AG04450 (cell line): ENCODE measurements at regions of chr6 and their contacts with region 1.

Region 1: DNA sequence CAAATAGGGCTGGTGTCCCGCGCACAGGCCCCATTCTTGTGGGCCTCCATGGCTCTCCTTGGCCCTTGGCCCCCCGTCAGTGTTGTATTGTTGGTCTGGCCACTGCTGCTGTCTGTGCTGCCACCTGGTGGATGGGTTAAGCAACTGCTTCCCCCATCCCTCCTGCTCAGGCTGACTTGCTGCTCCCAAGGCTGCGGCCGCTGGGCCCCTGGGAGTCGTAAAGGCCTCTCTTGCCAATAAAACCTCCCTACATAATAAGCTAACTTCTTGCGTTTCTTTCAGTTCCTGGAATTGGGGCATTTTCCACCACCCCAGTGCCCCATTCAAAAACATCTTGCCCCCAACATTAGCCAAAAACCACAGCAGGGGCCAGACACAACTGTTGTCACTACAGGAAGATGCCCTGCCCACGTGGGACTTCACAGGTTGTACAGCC is 27.1 kb downstream of the CD83 start:
- DNase-seq: peak; percentile 27
- H3K4me3 ChIP-seq: no peak overlapping the region
- H3K27ac ChIP-seq: no peak overlapping the region
- H3K27me3 ChIP-seq: peaks cover 25% of the 10 kb centered on the region
- CTCF ChIP-seq: peak; percentile 91

Region 2: DNA sequence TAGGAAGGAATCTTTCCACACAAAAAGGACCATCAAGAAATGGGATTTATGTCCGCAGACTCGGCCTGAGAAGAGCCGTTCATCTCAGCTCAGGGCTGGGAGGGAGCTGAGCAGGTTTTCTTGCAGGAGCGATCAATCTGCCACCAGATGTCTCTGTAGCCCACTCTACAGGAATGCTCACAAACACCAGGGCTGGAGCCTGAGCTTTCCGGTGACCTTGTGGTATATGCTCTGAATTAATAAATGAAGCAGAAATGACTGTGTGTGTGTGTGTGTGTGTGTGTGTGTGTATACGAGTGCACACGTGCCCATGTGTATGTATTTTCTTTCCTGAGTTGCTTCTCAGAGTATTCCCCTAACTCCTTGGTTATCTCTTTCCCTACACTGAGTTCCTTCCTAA is 15.1 kb before region 1 on chr6:
- CTCF ChIA-PET with region 1: interaction called, 25 read pairs
- POLR2A ChIA-PET with region 1: no interaction called
- DNase-seq: peak; percentile 49
- H3K4me3 ChIP-seq: no peak overlapping the region
- H3K27ac ChIP-seq: no peak overlapping the region
- H3K27me3 ChIP-seq: peaks cover 2% of the 10 kb centered on the region
- CTCF ChIP-seq: peak; percentile 66